ENCODE measurements at regions of chr4 and their contacts with region 1.

Region 1: DNA sequence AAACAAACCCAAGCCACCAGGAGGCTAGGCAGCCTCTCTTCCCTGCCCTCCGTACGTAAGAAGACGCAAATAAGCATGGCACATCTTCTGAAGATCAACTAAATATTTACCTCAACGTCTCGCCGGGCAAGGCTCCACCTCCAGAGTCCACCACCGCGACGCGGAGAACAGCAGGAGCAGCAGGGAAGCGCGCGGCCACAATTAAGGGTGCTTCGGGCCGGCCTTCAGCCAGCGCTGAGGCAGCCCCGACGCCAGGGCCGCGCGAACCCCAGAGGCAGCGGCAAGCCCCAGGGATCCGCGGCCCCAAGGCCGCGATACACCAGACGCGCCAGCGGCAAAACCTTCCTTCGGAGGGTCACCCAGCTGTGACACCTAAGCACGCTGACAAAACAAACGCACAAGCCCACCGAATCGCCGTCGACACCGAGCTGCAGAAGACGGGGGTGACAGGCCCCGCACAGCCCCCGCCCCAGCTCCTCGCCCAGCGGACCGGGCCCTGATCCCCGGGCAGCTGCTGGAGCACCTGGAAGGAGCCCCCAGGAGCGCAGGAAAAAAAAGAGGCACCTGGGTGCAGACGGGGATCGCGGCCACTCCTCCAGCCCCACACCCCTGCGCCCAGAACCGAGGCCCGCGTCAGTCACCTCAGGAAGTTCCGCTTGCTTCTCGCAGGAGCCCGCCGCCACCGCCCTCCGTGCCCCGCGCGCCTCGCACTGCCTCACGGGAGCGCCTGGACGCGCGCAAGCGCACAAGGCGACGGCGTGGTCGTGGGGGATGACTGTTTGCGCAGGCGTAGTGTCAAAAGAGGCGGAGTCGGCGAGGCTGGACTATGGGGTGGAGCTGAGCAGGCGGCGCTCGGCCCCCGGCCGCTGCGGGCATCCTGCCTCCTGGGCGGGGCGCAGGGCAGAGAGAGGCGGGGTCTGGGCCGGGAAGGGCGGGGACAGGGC is at the starts of genes HAUS3 and POLN:
- DNase-seq: peak; percentile 98 to 100 (median 100)
- H3K4me3 ChIP-seq: peak within 1 kb of the TSS; percentile 49 to 91
- H3K4me3 Mint-ChIP-seq: peak within 1 kb of the TSS; percentile 81 to 95 (median 91)
- H3K27ac ChIP-seq: peak within 1 kb of the TSS; percentile 88
- H3K27ac Mint-ChIP-seq: peak within 1 kb of the TSS; percentile 85 to 98 (median 93)
- H3K4me1 ChIP-seq: peaks cover 44% of the 10 kb centered on the region
- H3K4me1 Mint-ChIP-seq: peaks cover 46 to 73% (median 58%) of the 10 kb centered on the region in 4 donors
- H3K27me3 ChIP-seq: no peaks in the 10 kb centered on the region
- H3K27me3 Mint-ChIP-seq: no peaks in the 10 kb centered on the region
- total RNA-seq, gene HAUS3: 35.9 to 39.2 TPM
- total RNA-seq, gene POLN: 3.8 to 4.4 TPM

Region 2: GRCh38 chr4:1674682-1675081 is 567.0 kb before region 1 on chr4:
- CTCF ChIA-PET with region 1: no interaction called
- POLR2A ChIA-PET with region 1: no interaction called
- intact Hi-C with region 1: no loop called
- DNase-seq: no peak
- H3K4me3 ChIP-seq: no peak overlapping the region
- H3K4me3 Mint-ChIP-seq: no peak overlapping the region
- H3K27ac ChIP-seq: no peak overlapping the region
- H3K27ac Mint-ChIP-seq: no peak overlapping the region
- H3K4me1 ChIP-seq: no peaks in the 10 kb centered on the region
- H3K4me1 Mint-ChIP-seq: no peaks in the 10 kb centered on the region
- H3K27me3 ChIP-seq: no peaks in the 10 kb centered on the region
- H3K27me3 Mint-ChIP-seq: no peaks in the 10 kb centered on the region

Region 3: GRCh38 chr4:1856042-1856788 is 385.5 kb before region 1 on chr4 and contains the start of gene LETM1:
- CTCF ChIA-PET with region 1: no interaction called
- POLR2A ChIA-PET with region 1: no interaction called
- intact Hi-C with region 1: loop called (anchors 5 kb)
- DNase-seq: peak; percentile 90 to 92 (median 91)
- H3K4me3 ChIP-seq: peak within 1 kb of the TSS; percentile 47 to 89
- H3K4me3 Mint-ChIP-seq: peak within 1 kb of the TSS; percentile 81 to 90 (median 85)
- H3K27ac ChIP-seq: peak within 1 kb of the TSS; percentile 59
- H3K27ac Mint-ChIP-seq: peak within 1 kb of the TSS; percentile 25 to 84 (median 76)
- H3K4me1 ChIP-seq: peaks cover 44% of the 10 kb centered on the region
- H3K4me1 Mint-ChIP-seq: peaks cover 9 to 42% (median 31%) of the 10 kb centered on the region in 4 donors
- H3K27me3 ChIP-seq: no peaks in the 10 kb centered on the region
- H3K27me3 Mint-ChIP-seq: no peaks in the 10 kb centered on the region
- total RNA-seq, gene LETM1: 38.8 to 42.8 TPM

Region 4: DNA sequence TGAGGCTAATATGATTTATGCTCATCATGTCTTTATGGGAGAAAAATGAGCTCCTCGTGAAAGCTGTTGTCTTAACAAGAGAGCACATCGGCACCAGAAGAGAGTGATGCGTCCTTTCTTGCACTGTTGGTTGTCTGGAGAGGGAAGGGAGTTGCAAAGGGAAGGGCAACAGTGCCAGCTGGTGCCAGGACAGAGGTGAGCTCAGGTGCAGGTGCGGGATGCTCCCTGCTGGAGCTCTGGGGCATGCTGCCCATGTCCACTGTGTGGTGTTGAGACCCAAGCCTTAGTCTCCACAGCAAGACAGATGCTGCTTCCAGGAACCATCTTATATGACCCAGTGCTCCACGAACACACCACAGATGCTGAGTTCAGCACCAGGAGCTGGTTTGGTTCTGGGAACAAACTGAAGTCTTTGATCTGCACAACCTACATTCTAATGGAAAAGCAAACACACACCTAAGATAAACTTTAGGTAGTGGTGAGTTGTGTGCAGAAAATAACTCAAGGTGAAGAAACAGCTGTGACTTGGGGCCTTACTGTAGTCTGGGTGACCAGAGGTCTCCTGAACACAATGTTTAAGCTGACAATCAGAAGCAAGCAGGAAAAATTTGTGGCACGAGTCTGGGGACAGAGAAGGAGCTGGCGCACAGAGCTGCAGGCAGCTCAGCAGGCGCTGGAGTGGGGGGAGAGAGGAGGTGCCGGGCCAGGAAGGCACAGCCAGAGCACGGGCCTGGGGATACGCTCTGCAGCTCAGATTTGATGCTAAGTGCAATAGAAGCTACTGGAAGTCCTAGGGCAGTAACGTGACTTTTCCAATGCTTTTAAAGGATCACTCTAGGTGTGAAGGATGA is 73.0 kb before region 1 on chr4:
- CTCF ChIA-PET with region 1: no interaction called
- POLR2A ChIA-PET with region 1: no interaction called
- intact Hi-C with region 1: no loop called
- DNase-seq: no peak
- H3K4me3 ChIP-seq: no peak overlapping the region
- H3K4me3 Mint-ChIP-seq: no peak overlapping the region
- H3K27ac ChIP-seq: no peak overlapping the region
- H3K27ac Mint-ChIP-seq: peak overlapping the region in 1 of 7 donors; percentile 43
- H3K4me1 ChIP-seq: peaks cover 16% of the 10 kb centered on the region
- H3K4me1 Mint-ChIP-seq: peaks cover 16 to 21% (median 20%) of the 10 kb centered on the region in 4 donors
- H3K27me3 ChIP-seq: no peaks in the 10 kb centered on the region
- H3K27me3 Mint-ChIP-seq: no peaks in the 10 kb centered on the region

Region 5: GRCh38 chr4:2262143-2262943 is 20.7 kb after region 1 on chr4:
- CTCF ChIA-PET with region 1: interaction called, 4 read pairs
- POLR2A ChIA-PET with region 1: interaction called, 62 read pairs
- intact Hi-C with region 1: loop called (anchors 1 kb)
- DNase-seq: peak; percentile 98 to 99 (median 99)
- H3K4me3 ChIP-seq: peak overlapping the region in 1 of 2 donors; percentile 70
- H3K4me3 Mint-ChIP-seq: peak overlapping the region; percentile 65 to 93 (median 82)
- H3K27ac ChIP-seq: peak overlapping the region; percentile 89
- H3K27ac Mint-ChIP-seq: peak overlapping the region; percentile 59 to 92 (median 88)
- H3K4me1 ChIP-seq: peaks cover 46% of the 10 kb centered on the region
- H3K4me1 Mint-ChIP-seq: peaks cover 2 to 24% (median 5%) of the 10 kb centered on the region in 4 donors
- H3K27me3 ChIP-seq: no peaks in the 10 kb centered on the region
- H3K27me3 Mint-ChIP-seq: no peaks in the 10 kb centered on the region

Region 6: GRCh38 chr4:2290974-2291704 is 49.5 kb after region 1 on chr4:
- CTCF ChIA-PET with region 1: interaction called, 4 read pairs
- POLR2A ChIA-PET with region 1: interaction called, 6 read pairs
- intact Hi-C with region 1: loop called (anchors 2 kb)
- DNase-seq: peak; percentile 81 to 92 (median 84)
- H3K4me3 ChIP-seq: no peak overlapping the region
- H3K4me3 Mint-ChIP-seq: peak overlapping the region in 7 of 8 donors; percentile 77 to 91 (median 81)
- H3K27ac ChIP-seq: peak overlapping the region; percentile 71
- H3K27ac Mint-ChIP-seq: peak overlapping the region; percentile 96 to 99 (median 98)
- H3K4me1 ChIP-seq: peaks cover 41% of the 10 kb centered on the region
- H3K4me1 Mint-ChIP-seq: peaks cover 16 to 52% (median 34%) of the 10 kb centered on the region in 4 donors
- H3K27me3 ChIP-seq: no peaks in the 10 kb centered on the region
- H3K27me3 Mint-ChIP-seq: no peaks in the 10 kb centered on the region

Region 7: GRCh38 chr4:2418650-2419571 is 177.2 kb after region 1 on chr4 and contains the start of gene CFAP99:
- CTCF ChIA-PET with region 1: interaction called, 6 read pairs
- POLR2A ChIA-PET with region 1: interaction called, 55 read pairs
- intact Hi-C with region 1: loop called (anchors 1 kb)
- DNase-seq: peak; percentile 96 to 99 (median 97)
- H3K4me3 ChIP-seq: peak within 1 kb of the TSS; percentile 44 to 72
- H3K4me3 Mint-ChIP-seq: peak within 1 kb of the TSS; percentile 89 to 95 (median 92)
- H3K27ac ChIP-seq: peak within 1 kb of the TSS; percentile 78
- H3K27ac Mint-ChIP-seq: peak within 1 kb of the TSS; percentile 92 to 100 (median 98)
- H3K4me1 ChIP-seq: peaks cover 39% of the 10 kb centered on the region
- H3K4me1 Mint-ChIP-seq: peaks cover 29 to 48% (median 36%) of the 10 kb centered on the region in 4 donors
- H3K27me3 ChIP-seq: no peaks in the 10 kb centered on the region
- H3K27me3 Mint-ChIP-seq: no peaks in the 10 kb centered on the region
- total RNA-seq, gene CFAP99: 0.12 to 0.19 TPM

Region 8: GRCh38 chr4:2536193-2537010 is 294.7 kb after region 1 on chr4 and contains the start of gene FAM193A:
- CTCF ChIA-PET with region 1: no interaction called
- POLR2A ChIA-PET with region 1: interaction called, 10 read pairs
- intact Hi-C with region 1: no loop called
- DNase-seq: peak; percentile 98 to 99 (median 99)
- H3K4me3 ChIP-seq: peak within 1 kb of the TSS; percentile 52 to 70
- H3K4me3 Mint-ChIP-seq: peak within 1 kb of the TSS; percentile 88 to 95 (median 92)
- H3K27ac ChIP-seq: peak within 1 kb of the TSS; percentile 83
- H3K27ac Mint-ChIP-seq: peak within 1 kb of the TSS; percentile 92 to 97 (median 94)
- H3K4me1 ChIP-seq: peaks cover 37% of the 10 kb centered on the region
- H3K4me1 Mint-ChIP-seq: peaks cover 10 to 44% (median 16%) of the 10 kb centered on the region in 4 donors
- H3K27me3 ChIP-seq: no peaks in the 10 kb centered on the region
- H3K27me3 Mint-ChIP-seq: no peaks in the 10 kb centered on the region
- total RNA-seq, gene FAM193A: 47.8 TPM

Measured in CD4-positive, alpha-beta memory T cell (primary cell).